ENCODE measurements at regions of chr2 and their contacts with region 1.

Region 1: DNA sequence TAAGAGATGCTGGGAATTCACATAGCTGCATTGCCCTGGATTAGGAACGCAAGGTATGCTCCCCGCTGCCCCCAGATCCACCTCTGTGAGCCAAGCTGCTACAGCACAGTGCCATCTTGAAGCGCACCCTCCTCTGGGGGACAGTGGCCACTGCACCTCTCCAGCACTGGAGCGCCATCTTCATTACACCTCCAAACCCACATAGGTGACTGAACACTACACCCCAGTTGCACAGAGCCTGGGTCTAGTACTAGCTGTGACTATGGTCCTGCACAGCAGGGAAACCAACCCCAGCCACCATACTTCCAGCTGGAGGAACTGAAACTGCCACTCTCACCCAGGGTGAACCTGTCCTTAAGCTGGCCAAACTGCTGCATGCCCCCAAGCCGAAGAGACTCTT is 84.6 kb downstream of the TMEM237 start:
- DNase-seq: no peak
- H3K4me3 ChIP-seq: no peak overlapping the region
- H3K4me3 Mint-ChIP-seq: peak overlapping the region; percentile 13
- H3K27ac Mint-ChIP-seq: no peak overlapping the region
- H3K4me1 ChIP-seq: no peaks in the 10 kb centered on the region; the same call in 1 of the 2 replicates
- H3K4me1 Mint-ChIP-seq: no peaks in the 10 kb centered on the region
- H3K27me3 ChIP-seq: no peaks in the 10 kb centered on the region
- H3K27me3 Mint-ChIP-seq: no peaks in the 10 kb centered on the region
- CTCF ChIP-seq: peak in 1 of 2 experiments; percentile 19

Region 2: GRCh38 chr2:201580486-201580885 is 21.8 kb after region 1 on chr2:
- CTCF ChIA-PET with region 1: no interaction called
- POLR2A ChIA-PET with region 1: no interaction called
- intact Hi-C with region 1: loop called (anchors 1 kb)
- DNase-seq: peak in 1 of 2 experiments; percentile 45
- H3K4me3 ChIP-seq: no peak overlapping the region
- H3K4me3 Mint-ChIP-seq: peak overlapping the region; percentile 13
- H3K27ac Mint-ChIP-seq: peak overlapping the region; percentile 65
- H3K4me1 ChIP-seq: peaks cover 19% of the 10 kb centered on the region
- H3K4me1 Mint-ChIP-seq: peaks cover 20% of the 10 kb centered on the region
- H3K27me3 ChIP-seq: no peaks in the 10 kb centered on the region
- H3K27me3 Mint-ChIP-seq: no peaks in the 10 kb centered on the region
- CTCF ChIP-seq: no peak

Region 3: GRCh38 chr2:201642579-201643215 is 84.0 kb after region 1 on chr2:
- CTCF ChIA-PET with region 1: no interaction called
- POLR2A ChIA-PET with region 1: no interaction called
- intact Hi-C with region 1: loop called (anchors 1 kb)
- DNase-seq: peak; percentile 85 to 94
- H3K4me3 ChIP-seq: peak overlapping the region; percentile 64
- H3K4me3 Mint-ChIP-seq: peak overlapping the region; percentile 92
- H3K27ac Mint-ChIP-seq: peak overlapping the region; percentile 97
- H3K4me1 ChIP-seq: no peaks in the 10 kb centered on the region
- H3K4me1 Mint-ChIP-seq: peaks cover 18% of the 10 kb centered on the region
- H3K27me3 ChIP-seq: no peaks in the 10 kb centered on the region
- H3K27me3 Mint-ChIP-seq: no peaks in the 10 kb centered on the region
- CTCF ChIP-seq: no peak

Region 4: DNA sequence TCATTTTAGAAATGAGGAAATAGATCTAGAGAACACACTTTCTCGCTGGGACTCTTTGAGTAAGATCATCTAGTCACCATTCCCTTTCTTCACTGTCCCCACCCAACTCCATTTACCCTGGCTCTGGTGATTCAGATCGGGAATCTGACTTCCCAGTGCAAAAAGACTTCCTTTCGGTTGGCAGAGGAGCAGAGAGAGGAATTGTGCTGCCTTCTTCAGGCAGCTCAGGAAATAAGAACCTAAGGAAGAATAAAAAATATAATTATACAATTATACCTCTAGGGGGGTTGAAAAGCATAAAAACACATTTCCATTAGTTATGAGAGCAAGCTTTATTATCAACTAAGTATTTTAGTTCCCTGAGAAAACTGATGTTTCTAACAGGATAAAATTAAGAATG is 149.1 kb after region 1 on chr2:
- CTCF ChIA-PET with region 1: no interaction called
- POLR2A ChIA-PET with region 1: no interaction called
- intact Hi-C with region 1: no loop called
- DNase-seq: no peak
- H3K4me3 ChIP-seq: no peak overlapping the region
- H3K4me3 Mint-ChIP-seq: no peak overlapping the region
- H3K27ac Mint-ChIP-seq: no peak overlapping the region
- H3K4me1 ChIP-seq: no peaks in the 10 kb centered on the region
- H3K4me1 Mint-ChIP-seq: no peaks in the 10 kb centered on the region
- H3K27me3 ChIP-seq: no peaks in the 10 kb centered on the region
- H3K27me3 Mint-ChIP-seq: no peaks in the 10 kb centered on the region
- CTCF ChIP-seq: no peak

Region 5: GRCh38 chr2:202858575-202858974 is 1299.9 kb after region 1 on chr2:
- CTCF ChIA-PET with region 1: no interaction called
- POLR2A ChIA-PET with region 1: no interaction called
- intact Hi-C with region 1: no loop called
- DNase-seq: no peak
- H3K4me3 ChIP-seq: no peak overlapping the region
- H3K4me3 Mint-ChIP-seq: no peak overlapping the region
- H3K27ac Mint-ChIP-seq: no peak overlapping the region
- H3K4me1 ChIP-seq: no peaks in the 10 kb centered on the region
- H3K4me1 Mint-ChIP-seq: no peaks in the 10 kb centered on the region
- H3K27me3 ChIP-seq: no peaks in the 10 kb centered on the region
- H3K27me3 Mint-ChIP-seq: no peaks in the 10 kb centered on the region
- CTCF ChIP-seq: no peak

Measured in Caco-2 (cell line).